IMR-90 (cell line): ENCODE measurements at regions of chr2 and their contacts with region 1.

Region 1: DNA sequence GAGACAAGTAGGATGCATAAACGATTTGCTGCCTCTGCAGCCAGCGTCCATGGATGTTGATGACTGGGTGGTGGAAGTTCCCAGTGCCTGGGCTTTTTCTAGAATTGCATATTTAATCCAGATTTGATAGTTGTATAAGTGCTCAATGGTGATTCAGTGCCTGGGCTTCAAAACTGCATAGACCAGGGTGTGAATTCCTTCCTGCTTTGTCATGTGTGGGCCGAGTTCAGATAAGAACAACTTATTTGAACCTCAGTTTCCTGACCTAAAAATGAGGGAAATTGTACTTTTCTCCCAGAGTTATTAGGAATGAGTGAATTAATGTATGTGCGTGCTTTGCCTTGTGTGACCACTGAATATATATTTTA is 154.6 kb downstream of the WDSUB1 start:
- DNase-seq: peak; percentile 97
- ATAC-seq: peak; percentile 54
- H3K4me3 ChIP-seq: no peak overlapping the region
- H3K27ac ChIP-seq: peak overlapping the region; percentile 87; the same call in 1 of the 2 replicates
- H3K4me1 ChIP-seq: peaks cover 27% of the 10 kb centered on the region
- H3K27me3 ChIP-seq: no peaks in the 10 kb centered on the region
- CTCF ChIP-seq: no peak
- POLR2A ChIP-seq: no peak
- RAD21 ChIP-seq: peak; percentile 22; the same call in 1 of the 2 replicates

Region 2: GRCh38 chr2:159201360-159202063 is 69.6 kb after region 1 on chr2:
- CTCF ChIA-PET with region 1: no interaction called
- POLR2A ChIA-PET with region 1: no interaction called
- dilution Hi-C with region 1: no loop called
- in situ Hi-C with region 1: no loop called
- intact Hi-C with region 1: loop called (anchors 1 kb)
- DNase-seq: peak; percentile 78
- ATAC-seq: peak; percentile 5; the same call in 1 of the 2 replicates
- H3K4me3 ChIP-seq: no peak overlapping the region
- H3K27ac ChIP-seq: no peak overlapping the region
- H3K4me1 ChIP-seq: peaks cover 13% of the 10 kb centered on the region
- H3K27me3 ChIP-seq: no peaks in the 10 kb centered on the region
- CTCF ChIP-seq: no peak
- POLR2A ChIP-seq: no peak; the same call in 1 of the 2 replicates
- RAD21 ChIP-seq: no peak

Region 3: DNA sequence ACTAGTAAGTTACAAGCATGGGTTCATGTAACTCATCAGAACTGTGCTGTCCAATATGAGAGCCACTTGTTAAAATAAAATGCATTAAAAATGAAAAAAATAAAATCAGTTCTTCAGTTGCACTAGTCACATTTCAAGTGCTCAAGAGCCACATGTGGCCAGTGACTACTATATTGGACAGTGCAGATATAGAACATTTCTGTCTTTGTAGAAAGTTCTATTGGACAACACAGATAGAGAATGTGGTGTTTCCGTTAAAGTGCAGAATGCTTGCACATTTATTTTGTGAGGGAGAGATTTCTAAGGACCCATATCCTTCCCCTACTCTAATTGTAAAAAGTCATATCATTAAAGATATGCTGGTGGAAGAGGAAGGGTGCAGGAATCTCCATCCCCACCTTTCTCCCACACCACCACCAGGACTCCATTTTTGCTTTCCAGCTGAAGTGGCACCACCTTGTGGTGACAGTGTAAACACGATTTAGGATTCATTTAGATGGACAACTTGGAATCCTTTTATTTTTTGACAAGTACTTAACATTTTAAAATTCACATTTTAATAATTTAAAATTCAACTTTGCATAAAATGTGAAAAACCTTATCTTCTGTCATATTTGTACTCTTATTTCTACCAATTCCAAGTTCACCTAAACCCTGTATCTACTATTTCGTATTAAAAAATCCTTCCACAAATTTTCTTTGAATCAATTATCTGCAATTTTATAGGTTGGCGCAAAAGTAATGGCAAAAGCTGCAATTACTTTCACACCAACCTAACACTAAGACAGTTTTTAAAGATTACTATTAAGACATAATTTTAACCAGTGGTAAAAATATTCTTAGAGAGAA is 675.5 kb after region 1 on chr2:
- CTCF ChIA-PET with region 1: no interaction called
- POLR2A ChIA-PET with region 1: no interaction called
- dilution Hi-C with region 1: no loop called
- in situ Hi-C with region 1: no loop called
- intact Hi-C with region 1: loop called (anchors 10 kb)
- DNase-seq: peak; percentile 61
- ATAC-seq: peak; percentile 70
- H3K4me3 ChIP-seq: no peak overlapping the region
- H3K27ac ChIP-seq: no peak overlapping the region
- H3K4me1 ChIP-seq: no peaks in the 10 kb centered on the region
- H3K27me3 ChIP-seq: peaks cover 16% of the 10 kb centered on the region
- CTCF ChIP-seq: peak; percentile 75
- POLR2A ChIP-seq: no peak
- RAD21 ChIP-seq: peak; percentile 71